SK-N-SH (cell line): ENCODE measurements at regions of chr3 and their contacts with region 1.

Region 1: GRCh38 chr3:62277450-62277849 is 95.9 kb downstream of the FEZF2 start:
- DNase-seq: peak; percentile 35
- H3K4me3 ChIP-seq: no peak overlapping the region
- H3K27ac ChIP-seq: no peak overlapping the region
- H3K4me1 ChIP-seq: peaks cover 0 to 4% of the 10 kb centered on the region in 2 experiments; a peak in 1 of 4 replicates
- H3K27me3 ChIP-seq: no peaks in the 10 kb centered on the region
- CTCF ChIP-seq: no peak
- EP300 ChIP-seq: peak in 1 of 2 experiments; percentile 81; a peak in 2 of 4 replicates
- RAD21 ChIP-seq: no peak

Region 2: GRCh38 chr3:62229920-62230319 is 47.5 kb before region 1 on chr3:
- CTCF ChIA-PET with region 1: interaction called, 11 read pairs
- POLR2A ChIA-PET with region 1: no interaction called
- DNase-seq: peak; percentile 40
- H3K4me3 ChIP-seq: no peak overlapping the region
- H3K27ac ChIP-seq: no peak overlapping the region
- H3K4me1 ChIP-seq: no peaks in the 10 kb centered on the region
- H3K27me3 ChIP-seq: no peaks in the 10 kb centered on the region
- CTCF ChIP-seq: peak; percentile 45
- EP300 ChIP-seq: no peak
- RAD21 ChIP-seq: peak; percentile 56

Region 3: DNA sequence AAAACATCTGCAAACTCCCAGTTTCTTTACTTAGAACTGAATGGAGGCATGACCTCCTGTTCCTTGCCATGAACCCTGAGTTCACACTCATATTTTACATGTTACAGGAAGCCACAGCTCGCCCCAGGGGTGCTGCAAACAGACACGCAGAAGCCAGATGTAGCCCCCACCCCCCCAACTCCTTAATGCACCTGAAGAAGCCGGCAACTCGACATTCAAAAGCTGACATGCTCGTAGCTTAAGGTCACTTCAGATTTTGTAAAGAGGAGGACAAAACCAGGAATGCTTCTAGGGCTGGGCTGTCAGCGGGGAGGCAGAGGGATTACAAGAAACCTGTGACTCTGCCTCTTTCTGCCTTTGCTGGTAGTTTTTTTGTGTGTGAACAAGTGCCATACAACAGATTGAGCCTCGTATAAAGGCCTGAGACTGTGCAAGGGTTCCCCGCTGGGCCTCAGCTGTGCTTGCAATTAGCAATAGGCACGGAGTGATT is 137.9 kb after region 1 on chr3:
- CTCF ChIA-PET with region 1: no interaction called
- POLR2A ChIA-PET with region 1: no interaction called
- DNase-seq: no peak
- H3K4me3 ChIP-seq: no peak overlapping the region
- H3K27ac ChIP-seq: no peak overlapping the region
- H3K4me1 ChIP-seq: no peaks in the 10 kb centered on the region; a peak in 1 of 4 replicates
- H3K27me3 ChIP-seq: no peaks in the 10 kb centered on the region
- CTCF ChIP-seq: no peak
- EP300 ChIP-seq: no peak
- RAD21 ChIP-seq: no peak

Region 4: GRCh38 chr3:62493109-62493801 is 215.8 kb after region 1 on chr3:
- CTCF ChIA-PET with region 1: no interaction called
- POLR2A ChIA-PET with region 1: no interaction called
- DNase-seq: peak; percentile 11
- H3K4me3 ChIP-seq: no peak overlapping the region
- H3K27ac ChIP-seq: no peak overlapping the region
- H3K4me1 ChIP-seq: no peaks in the 10 kb centered on the region
- H3K27me3 ChIP-seq: no peaks in the 10 kb centered on the region
- CTCF ChIP-seq: peak; percentile 48
- EP300 ChIP-seq: no peak
- RAD21 ChIP-seq: no peak; the same call in 1 of the 2 replicates

Region 5: DNA sequence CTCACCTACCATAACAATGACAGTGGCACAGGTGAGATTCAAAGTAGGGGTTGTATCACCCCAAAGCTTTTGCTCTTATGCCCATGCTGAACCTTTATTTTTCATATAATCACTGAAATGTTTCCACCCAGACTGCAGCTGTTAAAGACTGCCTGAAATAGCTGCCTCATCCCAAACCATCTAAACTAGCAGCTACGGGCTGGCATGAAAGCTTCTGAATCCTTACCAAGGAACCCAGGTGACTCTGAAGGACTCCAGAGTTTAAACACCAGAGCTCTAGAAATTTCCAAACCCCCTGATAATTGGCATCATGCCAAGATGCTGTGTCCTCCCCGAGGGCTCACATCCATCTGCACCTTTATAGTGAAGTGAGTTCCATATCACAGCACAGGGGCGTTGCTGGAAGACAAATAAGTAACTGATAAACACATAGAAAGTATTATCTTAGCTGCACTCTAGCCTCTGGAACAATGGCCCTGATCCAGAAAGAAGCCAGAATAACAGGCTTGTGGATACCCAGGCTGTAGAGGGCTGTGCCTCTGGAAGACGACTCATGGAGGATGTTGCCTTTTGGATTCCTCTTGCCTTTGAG is 358.9 kb after region 1 on chr3:
- CTCF ChIA-PET with region 1: no interaction called
- POLR2A ChIA-PET with region 1: no interaction called
- DNase-seq: no peak
- H3K4me3 ChIP-seq: no peak overlapping the region
- H3K27ac ChIP-seq: no peak overlapping the region
- H3K4me1 ChIP-seq: no peaks in the 10 kb centered on the region
- H3K27me3 ChIP-seq: no peaks in the 10 kb centered on the region
- CTCF ChIP-seq: no peak
- EP300 ChIP-seq: no peak
- RAD21 ChIP-seq: no peak